HCT116 (cell line): ENCODE measurements at regions of chr5 and their contacts with region 1.

Region 1: DNA sequence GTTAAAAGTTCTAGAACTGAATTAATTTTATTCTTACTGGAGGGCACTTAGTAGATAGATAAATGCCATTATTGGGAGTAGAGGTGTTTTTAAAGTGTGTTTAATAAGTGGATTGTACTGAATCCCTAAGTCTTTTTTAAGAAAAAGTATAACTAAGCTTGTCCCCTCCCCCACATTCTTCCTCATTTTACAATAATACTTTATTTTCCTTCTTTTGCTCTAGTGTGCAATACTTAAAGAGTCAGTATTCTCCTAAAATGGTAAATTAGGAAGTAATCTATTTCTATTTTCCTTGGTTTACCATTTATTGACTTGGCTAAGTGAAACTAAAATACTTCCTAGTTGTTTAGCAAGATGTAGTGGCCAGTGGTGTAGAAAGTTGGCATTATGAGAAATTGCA is 11.6 kb downstream of the UBLCP1 start:
- DNase-seq: no peak
- ATAC-seq: no peak
- H3K4me3 ChIP-seq: no peak overlapping the region
- H3K27ac ChIP-seq: no peak overlapping the region
- H3K4me1 ChIP-seq: no peaks in the 10 kb centered on the region
- H3K27me3 ChIP-seq: no peaks in the 10 kb centered on the region
- CTCF ChIP-seq: no peak
- POLR2A ChIP-seq: no peak
- RAD21 ChIP-seq: no peak

Region 2: GRCh38 chr5:157718519-157718918 is 1556.2 kb before region 1 on chr5:
- CTCF ChIA-PET with region 1: no interaction called
- POLR2A ChIA-PET with region 1: no interaction called
- RAD21 ChIA-PET with region 1: no interaction called
- intact Hi-C with region 1: no loop called
- DNase-seq: peak; percentile 19
- ATAC-seq: peak; percentile 94
- H3K4me3 ChIP-seq: no peak overlapping the region
- H3K27ac ChIP-seq: no peak overlapping the region
- H3K4me1 ChIP-seq: peaks cover 0 to 10% of the 10 kb centered on the region in 2 experiments; a peak in 2 of 4 replicates
- H3K27me3 ChIP-seq: no peaks in the 10 kb centered on the region
- CTCF ChIP-seq: peak; percentile 31 to 73 (median 63); a peak in 4 of 6 replicates
- POLR2A ChIP-seq: no peak
- RAD21 ChIP-seq: peak; percentile 93

Region 3: DNA sequence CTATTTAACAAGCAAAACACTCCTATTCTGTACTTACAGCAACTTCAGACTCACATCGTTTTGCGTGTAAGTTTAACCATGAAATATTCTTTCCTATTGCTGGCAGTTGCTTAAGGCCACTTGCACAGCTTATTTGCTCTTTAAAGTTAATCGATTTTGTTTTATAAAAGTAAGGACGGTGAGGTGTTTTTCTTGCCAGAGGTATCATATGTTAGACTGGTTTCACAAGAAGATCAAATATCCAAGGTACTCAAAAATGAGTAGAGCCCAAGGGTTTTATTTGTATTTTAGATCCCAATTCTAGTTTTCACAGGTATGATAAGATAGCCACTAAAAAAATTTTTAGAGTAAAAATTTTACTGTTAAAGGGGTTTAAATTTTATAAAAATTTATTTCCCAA is 1431.9 kb before region 1 on chr5:
- CTCF ChIA-PET with region 1: no interaction called
- POLR2A ChIA-PET with region 1: no interaction called
- RAD21 ChIA-PET with region 1: no interaction called
- intact Hi-C with region 1: no loop called
- DNase-seq: no peak
- ATAC-seq: no peak
- H3K4me3 ChIP-seq: no peak overlapping the region
- H3K27ac ChIP-seq: no peak overlapping the region
- H3K4me1 ChIP-seq: no peaks in the 10 kb centered on the region
- H3K27me3 ChIP-seq: no peaks in the 10 kb centered on the region
- CTCF ChIP-seq: no peak
- POLR2A ChIP-seq: no peak
- RAD21 ChIP-seq: no peak

Region 4: GRCh38 chr5:159163027-159163700 is 111.5 kb before region 1 on chr5:
- CTCF ChIA-PET with region 1: no interaction called
- POLR2A ChIA-PET with region 1: no interaction called
- RAD21 ChIA-PET with region 1: no interaction called
- intact Hi-C with region 1: loop called (anchors 5 kb)
- DNase-seq: peak; percentile 32
- ATAC-seq: peak; percentile 88
- H3K4me3 ChIP-seq: no peak overlapping the region
- H3K27ac ChIP-seq: no peak overlapping the region
- H3K4me1 ChIP-seq: peaks cover 0 to 13% of the 10 kb centered on the region in 2 experiments; a peak in 2 of 4 replicates
- H3K27me3 ChIP-seq: no peaks in the 10 kb centered on the region
- CTCF ChIP-seq: no peak
- POLR2A ChIP-seq: no peak
- RAD21 ChIP-seq: no peak

Region 5: DNA sequence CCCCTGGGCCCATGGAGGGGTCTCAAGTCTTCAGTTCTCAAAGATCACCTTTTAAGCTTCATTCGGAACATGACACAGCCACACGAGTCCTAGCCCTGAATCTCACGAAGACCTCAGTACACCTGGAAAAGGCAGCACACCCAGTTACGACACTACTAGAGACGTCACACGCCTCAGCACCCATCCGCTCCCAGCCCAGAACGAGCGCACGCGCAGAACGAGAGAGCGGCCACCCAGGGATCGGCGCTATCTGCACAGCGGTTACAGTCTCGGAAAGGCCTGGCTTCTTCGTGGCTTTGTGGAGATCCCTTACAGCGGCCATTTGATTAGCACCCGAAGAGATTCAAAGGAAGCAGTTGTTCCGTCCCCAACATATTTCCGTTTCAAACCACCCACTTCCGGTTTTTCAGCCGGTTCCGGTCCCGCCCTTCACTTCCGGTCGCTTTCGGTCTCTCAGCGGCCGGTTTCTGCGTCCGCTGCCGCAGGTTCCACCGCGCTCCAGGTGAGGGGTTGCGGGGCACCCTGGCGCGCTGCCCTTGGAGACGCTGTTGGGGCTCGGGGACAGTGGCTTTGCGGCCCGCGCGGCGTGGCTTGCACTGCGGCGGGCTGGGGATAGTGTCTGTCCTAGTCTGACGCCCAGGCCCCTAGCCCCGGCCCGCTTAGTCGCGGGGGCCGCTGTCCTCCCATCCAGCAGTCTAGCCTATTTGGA is 11.7 kb before region 1 on chr5 and contains the start of gene UBLCP1:
- CTCF ChIA-PET with region 1: no interaction called
- POLR2A ChIA-PET with region 1: no interaction called
- RAD21 ChIA-PET with region 1: no interaction called
- intact Hi-C with region 1: no loop called
- DNase-seq: peak; percentile 78
- ATAC-seq: peak; percentile 90
- H3K4me3 ChIP-seq: peak within 1 kb of the TSS; percentile 93 to 98
- H3K27ac ChIP-seq: peak within 1 kb of the TSS; percentile 79
- H3K4me1 ChIP-seq: peaks cover 0 to 17% of the 10 kb centered on the region in 2 experiments; a peak in 3 of 4 replicates
- H3K27me3 ChIP-seq: no peaks in the 10 kb centered on the region
- CTCF ChIP-seq: no peak
- POLR2A ChIP-seq: peak; percentile 89
- RAD21 ChIP-seq: no peak
- total RNA-seq, gene UBLCP1: 32.9 TPM